Natural killer cell (primary cell): ENCODE measurements at regions of chr17 and their contacts with region 1.

Region 1: GRCh38 chr17:14203388-14203787 is 33.3 kb downstream of the CDRT15 start:
- DNase-seq: peak in 1 of 2 donors; percentile 74
- ATAC-seq: peak in 2 of 3 donors; percentile 11 to 39
- H3K4me3 ChIP-seq: no peak overlapping the region
- H3K4me3 Mint-ChIP-seq: peak overlapping the region; percentile 40
- H3K27ac ChIP-seq: peak overlapping the region; percentile 34
- H3K27ac Mint-ChIP-seq: peak overlapping the region; percentile 91 to 92
- H3K4me1 ChIP-seq: peaks cover 92% of the 10 kb centered on the region
- H3K4me1 Mint-ChIP-seq: peaks cover 98 to 100% of the 10 kb centered on the region in 2 donors
- H3K27me3 ChIP-seq: no peaks in the 10 kb centered on the region
- H3K27me3 Mint-ChIP-seq: no peaks in the 10 kb centered on the region
- CTCF ChIP-seq: peak; percentile 39

Region 2: DNA sequence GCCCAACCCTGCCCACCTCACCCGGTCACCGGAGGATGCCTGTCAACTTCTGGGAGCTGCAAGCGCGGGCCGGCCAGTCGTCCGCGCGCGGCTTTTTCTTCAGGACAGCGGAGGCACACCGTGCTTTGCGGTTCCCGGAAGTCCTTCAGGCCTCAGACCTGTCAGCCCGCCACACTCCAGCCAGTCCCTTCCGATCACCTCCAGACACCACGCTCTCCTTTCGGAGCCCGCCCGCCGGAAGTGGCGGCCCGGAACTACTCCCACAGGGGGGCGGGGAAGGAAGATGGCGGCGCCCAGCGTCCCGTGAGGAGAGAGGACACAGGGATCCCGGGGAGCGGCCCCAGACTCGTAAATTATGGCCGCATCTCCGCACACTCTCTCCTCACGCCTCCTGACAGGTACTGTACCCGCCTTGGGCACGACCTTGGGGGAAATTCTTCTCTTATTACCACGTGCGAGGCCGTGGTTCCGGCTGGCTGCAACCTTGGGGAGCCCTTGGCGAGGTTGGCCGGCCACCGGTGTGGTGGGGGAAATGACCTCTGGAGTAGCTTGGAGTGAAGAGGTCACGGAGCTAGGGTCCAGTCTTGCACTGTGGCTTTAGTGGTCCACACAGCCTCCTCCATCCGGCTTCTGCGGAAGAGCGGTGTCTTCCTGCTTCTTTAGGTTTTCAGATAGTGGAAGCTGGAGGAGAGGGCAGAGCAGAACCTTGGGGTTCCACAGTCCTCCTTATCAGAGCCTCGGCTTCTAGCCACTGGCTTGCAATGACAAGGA is 134.0 kb before region 1 on chr17 and contains the start of gene COX10:
- intact Hi-C with region 1: loop called (anchors 5 kb)
- DNase-seq: peak; percentile 79 to 86
- ATAC-seq: peak; percentile 96 to 99 (median 98)
- H3K4me3 ChIP-seq: peak within 1 kb of the TSS; percentile 100
- H3K4me3 Mint-ChIP-seq: peak within 1 kb of the TSS; percentile 96
- H3K27ac ChIP-seq: peak within 1 kb of the TSS; percentile 80
- H3K27ac Mint-ChIP-seq: peak within 1 kb of the TSS; percentile 90 to 92
- H3K4me1 ChIP-seq: peaks cover 13% of the 10 kb centered on the region
- H3K4me1 Mint-ChIP-seq: peaks cover 36 to 39% of the 10 kb centered on the region in 2 donors
- H3K27me3 ChIP-seq: no peaks in the 10 kb centered on the region
- H3K27me3 Mint-ChIP-seq: no peaks in the 10 kb centered on the region
- CTCF ChIP-seq: no peak
- total RNA-seq, gene COX10: 12.5 to 17.0 (median 13.5) TPM

Region 3: GRCh38 chr17:14080847-14081251 is 122.5 kb before region 1 on chr17:
- intact Hi-C with region 1: no loop called
- DNase-seq: no peak
- ATAC-seq: no peak
- H3K4me3 ChIP-seq: no peak overlapping the region
- H3K4me3 Mint-ChIP-seq: no peak overlapping the region
- H3K27ac ChIP-seq: no peak overlapping the region
- H3K27ac Mint-ChIP-seq: no peak overlapping the region
- H3K4me1 ChIP-seq: no peaks in the 10 kb centered on the region
- H3K4me1 Mint-ChIP-seq: peaks cover 0 to 23% of the 10 kb centered on the region in 2 donors
- H3K27me3 ChIP-seq: no peaks in the 10 kb centered on the region
- H3K27me3 Mint-ChIP-seq: no peaks in the 10 kb centered on the region
- CTCF ChIP-seq: no peak

Region 4: GRCh38 chr17:14118951-14119350 is 84.4 kb before region 1 on chr17:
- intact Hi-C with region 1: loop called (anchors 5 kb)
- DNase-seq: peak in 1 of 2 donors; percentile 24
- ATAC-seq: no peak
- H3K4me3 ChIP-seq: no peak overlapping the region
- H3K4me3 Mint-ChIP-seq: no peak overlapping the region
- H3K27ac ChIP-seq: no peak overlapping the region
- H3K27ac Mint-ChIP-seq: peak overlapping the region in 1 of 2 donors; percentile 58
- H3K4me1 ChIP-seq: no peaks in the 10 kb centered on the region
- H3K4me1 Mint-ChIP-seq: peaks cover 50 to 51% of the 10 kb centered on the region in 2 donors
- H3K27me3 ChIP-seq: no peaks in the 10 kb centered on the region
- H3K27me3 Mint-ChIP-seq: no peaks in the 10 kb centered on the region
- CTCF ChIP-seq: no peak

Region 5: DNA sequence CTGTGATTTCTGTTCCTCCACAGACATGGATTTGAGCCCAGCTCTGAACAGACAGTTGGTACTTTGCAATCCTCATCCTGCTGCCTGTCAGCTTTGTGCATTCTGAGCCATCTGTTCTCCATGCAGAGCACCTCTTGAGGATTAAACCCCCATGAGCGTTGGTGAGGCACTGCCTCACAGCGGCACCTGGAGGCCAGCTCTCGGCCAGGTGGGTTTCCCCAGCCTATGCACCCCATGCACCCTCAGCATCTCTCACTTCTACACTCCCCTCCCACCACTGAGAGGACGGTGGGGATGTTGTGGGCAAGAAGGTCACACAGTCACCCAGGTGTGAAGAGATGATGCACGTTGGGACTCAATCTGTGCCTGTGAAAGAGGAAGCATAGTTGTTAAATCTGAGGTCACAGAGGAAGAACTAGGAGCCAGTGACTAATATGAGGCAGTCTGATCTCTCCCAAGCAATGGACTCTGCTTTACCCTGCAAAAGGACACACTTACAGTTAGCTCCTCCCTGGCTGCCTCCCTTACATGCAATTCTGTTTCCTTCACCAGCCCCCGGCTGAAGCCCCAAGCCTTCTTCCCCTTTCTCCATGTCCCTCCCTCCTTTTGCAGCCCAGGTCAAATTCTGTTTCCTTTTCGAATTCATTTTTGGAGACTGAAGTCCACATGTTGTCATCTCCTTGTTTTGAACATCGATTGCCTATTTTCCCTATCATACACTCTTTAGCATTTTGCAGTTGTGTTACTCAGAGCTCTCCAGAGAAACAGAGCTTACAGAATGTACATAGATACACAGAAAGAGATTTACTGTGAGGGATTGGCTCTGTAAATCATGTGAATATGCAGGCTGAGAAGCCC is 156.0 kb after region 1 on chr17:
- intact Hi-C with region 1: loop called (anchors 5 kb)
- DNase-seq: peak; percentile 72 to 75
- ATAC-seq: peak; percentile 91 to 99 (median 95)
- H3K4me3 ChIP-seq: no peak overlapping the region
- H3K4me3 Mint-ChIP-seq: peak overlapping the region; percentile 54
- H3K27ac ChIP-seq: no peak overlapping the region
- H3K27ac Mint-ChIP-seq: peak overlapping the region; percentile 49 to 52
- H3K4me1 ChIP-seq: peaks cover 25% of the 10 kb centered on the region
- H3K4me1 Mint-ChIP-seq: peaks cover 22 to 26% of the 10 kb centered on the region in 2 donors
- H3K27me3 ChIP-seq: peaks cover 3% of the 10 kb centered on the region
- H3K27me3 Mint-ChIP-seq: peaks cover 10 to 26% of the 10 kb centered on the region in 2 donors
- CTCF ChIP-seq: peak; percentile 48

Region 6: GRCh38 chr17:14427900-14428647 is 224.7 kb after region 1 on chr17:
- intact Hi-C with region 1: loop called (anchors 5 kb)
- DNase-seq: peak; percentile 55 to 87
- ATAC-seq: peak; percentile 95 to 99 (median 98)
- H3K4me3 ChIP-seq: peak overlapping the region; percentile 13
- H3K4me3 Mint-ChIP-seq: peak overlapping the region; percentile 88
- H3K27ac ChIP-seq: peak overlapping the region; percentile 74
- H3K27ac Mint-ChIP-seq: peak overlapping the region; percentile 77 to 85
- H3K4me1 ChIP-seq: peaks cover 34% of the 10 kb centered on the region
- H3K4me1 Mint-ChIP-seq: peaks cover 54 to 58% of the 10 kb centered on the region in 2 donors
- H3K27me3 ChIP-seq: no peaks in the 10 kb centered on the region
- H3K27me3 Mint-ChIP-seq: peaks cover 0 to 2% of the 10 kb centered on the region in 2 donors
- CTCF ChIP-seq: no peak